AG04449 (cell line): ENCODE measurements at regions of chr1 and their contacts with region 1.

Region 1: GRCh38 chr1:111481387-111482221 is 7.8 kb downstream of the C1orf162 start:
- DNase-seq: peak; percentile 3
- H3K4me3 ChIP-seq: no peak overlapping the region
- CTCF ChIP-seq: peak; percentile 86

Region 2: DNA sequence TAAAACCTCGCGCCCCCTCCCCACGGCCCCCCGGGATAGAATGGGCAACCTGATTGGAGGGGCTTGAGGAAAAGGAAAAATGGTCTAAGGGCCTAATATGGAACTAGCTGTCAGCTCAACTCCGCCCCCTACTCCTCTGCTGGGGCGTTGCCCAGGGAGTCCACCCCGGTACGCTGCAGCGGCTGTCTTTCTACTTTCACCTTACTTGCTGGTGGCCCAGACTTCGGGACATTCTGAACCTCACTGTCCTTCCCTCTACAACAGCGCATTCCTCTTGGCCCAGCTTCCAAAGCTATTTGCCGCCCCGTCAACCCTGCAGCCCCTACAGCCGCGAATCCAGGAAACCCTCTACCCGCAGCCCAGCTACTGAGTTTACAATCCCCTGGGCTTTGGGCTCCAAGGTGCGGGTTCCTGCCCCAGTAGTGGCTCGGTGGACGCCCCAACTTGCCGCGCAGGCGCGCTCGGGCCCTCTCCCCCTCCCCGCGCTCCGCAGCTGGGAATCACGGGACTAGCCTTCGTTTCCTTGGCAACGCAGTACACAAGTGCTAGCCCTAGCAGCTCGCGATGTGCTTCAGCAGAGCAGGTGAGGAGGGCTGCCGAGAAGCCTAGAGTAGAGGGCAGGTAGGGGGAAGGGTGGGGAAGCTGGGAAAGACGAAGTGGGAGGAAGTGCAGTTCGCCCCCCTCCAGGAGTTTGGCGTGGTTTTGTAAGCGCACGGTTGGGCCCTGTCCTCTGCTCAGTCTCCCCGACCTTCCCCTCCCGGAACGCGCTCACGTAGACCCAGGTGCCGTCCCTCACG is 135.3 kb before region 1 on chr1:
- CTCF ChIA-PET with region 1: no interaction called
- POLR2A ChIA-PET with region 1: no interaction called
- DNase-seq: no peak
- H3K4me3 ChIP-seq: peak overlapping the region; percentile 65
- CTCF ChIP-seq: peak; percentile 5

Region 3: DNA sequence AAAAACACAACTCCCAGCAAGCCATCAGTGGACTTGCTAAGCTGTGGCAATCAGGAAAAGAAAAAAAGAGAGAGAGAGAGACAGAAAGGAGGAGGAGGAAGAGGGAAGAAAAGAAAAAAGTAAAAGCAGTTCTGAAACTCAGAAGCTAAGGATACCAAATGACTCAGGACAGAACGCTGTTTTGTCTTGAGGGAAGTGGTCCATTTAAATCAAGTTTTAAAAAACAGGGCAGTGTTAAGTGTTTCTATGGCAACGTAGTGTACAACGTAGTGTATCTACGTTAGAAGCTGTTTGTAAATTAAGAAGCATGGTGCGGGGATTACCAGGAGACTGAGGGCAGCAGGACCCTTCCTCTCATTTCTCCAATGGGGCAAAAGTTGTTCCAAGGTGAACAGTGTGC is 16.0 kb after region 1 on chr1:
- CTCF ChIA-PET with region 1: interaction called, 11 read pairs
- POLR2A ChIA-PET with region 1: no interaction called
- DNase-seq: no peak
- H3K4me3 ChIP-seq: no peak overlapping the region
- CTCF ChIP-seq: no peak

Region 4: DNA sequence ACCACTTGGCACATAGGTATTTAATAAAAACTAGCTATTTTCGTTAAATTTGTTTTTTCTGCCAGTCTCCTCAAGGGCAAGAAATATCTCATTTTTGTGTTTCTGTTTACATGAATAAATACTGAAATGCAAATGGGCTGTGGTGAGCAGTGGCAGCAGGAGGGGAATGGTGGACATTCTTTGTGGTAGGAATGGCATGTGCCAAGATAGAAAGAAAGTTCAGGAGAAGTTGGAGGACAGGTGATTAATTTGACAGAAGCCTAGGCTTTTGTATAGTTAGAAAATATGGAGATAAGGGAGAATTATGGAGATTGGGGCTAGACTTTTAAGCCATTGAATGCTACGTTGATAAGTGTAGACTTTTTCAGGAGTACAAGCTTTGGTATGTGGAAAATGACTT is 146.5 kb after region 1 on chr1:
- CTCF ChIA-PET with region 1: no interaction called
- POLR2A ChIA-PET with region 1: no interaction called
- DNase-seq: no peak
- H3K4me3 ChIP-seq: no peak overlapping the region
- CTCF ChIP-seq: no peak

Region 5: DNA sequence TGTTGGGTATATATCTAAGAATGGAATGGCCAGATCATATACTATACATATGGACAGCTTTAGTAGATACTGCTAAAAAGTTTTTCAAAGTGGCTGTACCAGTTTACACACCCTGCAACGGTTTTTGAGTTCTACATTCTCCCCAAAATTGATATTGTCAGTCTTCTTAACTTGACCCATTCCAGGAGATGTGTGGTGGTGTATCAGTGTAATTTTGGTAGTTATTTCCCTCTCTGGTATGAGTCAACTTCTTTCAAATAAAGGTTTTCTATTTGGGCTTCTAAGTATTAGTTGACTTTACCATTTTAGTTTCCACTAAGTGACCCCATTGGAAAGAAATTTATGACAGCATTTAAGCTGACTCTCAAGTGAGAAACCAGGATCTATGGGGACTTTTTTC is 228.4 kb after region 1 on chr1:
- CTCF ChIA-PET with region 1: interaction called, 59 read pairs
- POLR2A ChIA-PET with region 1: no interaction called
- DNase-seq: no peak
- H3K4me3 ChIP-seq: no peak overlapping the region
- CTCF ChIP-seq: no peak

Region 6: GRCh38 chr1:111747282-111747734 is 265.7 kb after region 1 on chr1:
- CTCF ChIA-PET with region 1: interaction called, 82 read pairs
- POLR2A ChIA-PET with region 1: no interaction called
- DNase-seq: no peak
- H3K4me3 ChIP-seq: no peak overlapping the region
- CTCF ChIP-seq: peak; percentile 78

Region 7: GRCh38 chr1:111769517-111770146 is 288.0 kb after region 1 on chr1:
- CTCF ChIA-PET with region 1: interaction called, 122 read pairs
- POLR2A ChIA-PET with region 1: no interaction called
- DNase-seq: no peak
- H3K4me3 ChIP-seq: no peak overlapping the region
- CTCF ChIP-seq: peak; percentile 58